PC-3 (cell line): ENCODE measurements at regions of chr6 and their contacts with region 1.

Region 1: DNA sequence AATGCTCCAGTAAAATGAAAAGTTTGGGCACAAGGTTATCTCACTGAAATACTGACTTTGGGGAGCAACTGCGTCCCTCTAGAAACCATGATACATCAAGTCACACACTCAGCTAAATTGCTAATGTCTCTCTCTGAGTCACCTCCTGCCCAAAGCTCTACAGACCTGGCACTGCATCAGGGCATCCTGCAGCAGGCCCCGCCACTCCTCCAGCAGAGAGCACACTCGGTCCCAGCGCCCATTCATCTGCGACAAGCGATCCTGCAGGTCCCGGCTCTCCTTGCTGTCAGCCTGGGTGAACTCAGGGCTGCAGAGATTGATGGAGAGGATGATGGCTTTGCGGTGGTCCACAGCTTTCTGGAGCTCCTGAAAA is 329.0 kb downstream of the ESR1 start:
- DNase-seq: peak; percentile 85
- ATAC-seq: peak; percentile 98
- H3K4me3 ChIP-seq: peak overlapping the region; percentile 18; the same call in 1 of the 2 replicates
- H3K27ac ChIP-seq: peak overlapping the region; percentile 86
- H3K4me1 ChIP-seq: peaks cover 14% of the 10 kb centered on the region
- H3K27me3 ChIP-seq: no peaks in the 10 kb centered on the region
- CTCF ChIP-seq: peak; percentile 41; the same call in 1 of the 2 replicates

Region 2: DNA sequence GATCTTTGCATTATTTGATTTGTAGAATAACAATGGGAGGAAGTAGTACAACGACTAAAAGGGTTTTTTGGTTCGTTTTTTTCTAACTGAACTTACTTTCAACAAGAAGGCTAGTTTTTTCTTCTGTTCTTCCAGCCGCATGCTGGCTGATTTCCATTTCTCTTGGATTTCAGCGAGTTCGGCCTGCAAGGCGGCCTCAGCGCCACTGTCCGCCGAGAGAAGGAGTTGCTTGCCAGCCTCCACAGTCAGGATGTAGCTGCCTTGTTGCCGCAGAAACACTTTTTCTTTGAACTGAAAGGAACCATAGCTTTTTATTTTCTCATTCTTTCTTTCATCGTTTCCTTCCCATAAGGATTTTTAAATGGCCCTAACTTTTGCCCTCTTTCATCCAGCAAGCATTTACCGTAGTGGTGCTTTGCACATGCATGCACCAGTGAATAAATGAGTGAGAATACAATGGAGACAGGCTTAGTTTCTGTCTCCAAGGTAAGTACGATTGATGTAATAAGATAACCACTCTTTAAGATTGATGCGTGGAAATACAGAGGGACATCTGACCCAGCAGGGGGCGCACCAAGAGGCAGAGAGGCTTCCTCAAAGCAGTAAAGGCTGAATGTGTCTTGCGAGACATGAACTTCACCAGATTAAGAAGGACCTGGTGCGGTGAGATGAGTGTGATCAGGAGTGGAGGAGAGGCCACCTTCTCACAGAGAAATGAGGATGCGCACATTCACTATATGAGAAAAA is 69.8 kb after region 1 on chr6:
- CTCF ChIA-PET with region 1: no interaction called
- POLR2A ChIA-PET with region 1: no interaction called
- intact Hi-C with region 1: loop called (anchors 2 kb)
- DNase-seq: peak; percentile 9
- ATAC-seq: no peak
- H3K4me3 ChIP-seq: no peak overlapping the region
- H3K27ac ChIP-seq: no peak overlapping the region
- H3K4me1 ChIP-seq: peaks cover 22% of the 10 kb centered on the region
- H3K27me3 ChIP-seq: no peaks in the 10 kb centered on the region
- CTCF ChIP-seq: peak; percentile 59

Region 3: DNA sequence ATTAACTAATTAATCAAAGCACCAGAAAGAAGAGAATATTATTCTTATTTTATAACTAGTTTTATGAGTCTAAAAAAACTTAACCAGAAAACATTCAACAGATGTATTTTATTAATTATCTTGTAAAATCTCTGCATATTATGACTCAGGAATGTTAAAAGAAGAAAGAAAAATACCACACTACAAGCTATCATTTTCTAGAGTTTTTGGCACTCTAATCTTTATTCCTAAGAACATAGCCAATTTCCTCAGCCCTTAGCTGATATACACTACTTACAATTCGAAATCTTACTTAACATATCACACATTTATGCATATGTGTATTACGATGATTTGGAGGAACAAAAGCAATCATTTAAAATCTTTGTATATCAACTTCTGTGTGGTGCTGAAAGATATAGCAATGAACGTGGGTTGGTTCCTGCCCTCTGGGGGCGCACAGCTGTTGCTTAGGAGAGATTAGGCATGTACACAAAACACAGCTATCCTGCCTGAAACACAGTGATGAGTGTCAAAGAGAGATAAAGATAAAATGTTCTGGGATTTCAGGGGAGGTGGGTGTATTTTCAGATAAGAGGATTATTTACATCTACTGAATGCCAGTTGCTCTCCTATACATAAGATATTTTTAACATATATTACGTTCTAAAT is 96.2 kb after region 1 on chr6:
- CTCF ChIA-PET with region 1: no interaction called
- POLR2A ChIA-PET with region 1: no interaction called
- intact Hi-C with region 1: no loop called
- DNase-seq: no peak
- ATAC-seq: peak; percentile 43; the same call in 1 of the 2 replicates
- H3K4me3 ChIP-seq: no peak overlapping the region
- H3K27ac ChIP-seq: no peak overlapping the region
- H3K4me1 ChIP-seq: peaks cover 11% of the 10 kb centered on the region; the same call in 1 of the 2 replicates
- H3K27me3 ChIP-seq: no peaks in the 10 kb centered on the region
- CTCF ChIP-seq: no peak

Region 4: GRCh38 chr6:152401978-152402377 is 265.5 kb after region 1 on chr6:
- CTCF ChIA-PET with region 1: no interaction called
- POLR2A ChIA-PET with region 1: no interaction called
- intact Hi-C with region 1: no loop called
- DNase-seq: peak; percentile 86
- ATAC-seq: peak; percentile 98
- H3K4me3 ChIP-seq: no peak overlapping the region
- H3K27ac ChIP-seq: peak overlapping the region; percentile 44
- H3K4me1 ChIP-seq: peaks cover 34% of the 10 kb centered on the region
- H3K27me3 ChIP-seq: no peaks in the 10 kb centered on the region
- CTCF ChIP-seq: no peak